Caco-2 (cell line): ENCODE measurements at regions of chr1 and their contacts with region 1.

Region 1: DNA sequence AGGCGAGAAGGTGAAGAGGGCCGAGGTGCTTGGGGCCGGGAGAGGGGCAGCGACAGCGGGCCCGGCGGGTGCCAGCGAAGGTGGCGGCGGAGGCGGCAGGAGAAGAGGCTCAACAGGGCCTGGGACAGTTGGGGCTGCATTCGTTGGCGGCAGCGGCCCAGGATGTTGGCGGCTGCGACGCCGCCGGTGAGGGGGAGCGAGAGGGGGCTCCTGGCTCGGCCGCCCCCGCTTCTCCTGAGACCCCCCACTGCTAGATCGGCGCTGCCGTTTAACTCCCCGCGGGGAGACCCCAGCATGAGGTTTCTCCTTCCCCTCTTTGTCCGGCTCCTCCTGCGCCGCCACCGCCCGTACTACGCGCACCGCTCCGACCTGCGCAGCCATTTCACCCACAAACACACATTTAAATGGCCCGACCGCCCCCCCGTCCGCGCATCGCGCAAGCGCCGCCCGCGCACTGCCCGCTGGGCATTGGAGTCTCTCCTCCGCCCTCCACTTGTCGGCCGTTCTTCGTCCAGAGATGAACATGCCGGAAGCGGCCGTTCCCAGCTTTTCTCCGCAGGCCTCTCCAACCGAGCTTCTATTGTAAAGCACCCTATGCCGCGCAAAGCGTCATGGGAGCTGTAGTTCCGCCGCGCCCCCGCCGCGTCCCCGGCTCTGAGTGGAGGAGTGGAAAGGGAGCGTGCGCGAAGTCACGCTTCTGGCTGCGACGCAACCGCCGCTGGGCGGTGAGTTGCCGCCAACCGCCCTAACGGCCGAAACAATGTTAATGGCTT is at the start of gene RSBN1:
- DNase-seq: peak; percentile 95 to 98
- H3K4me3 ChIP-seq: peak within 1 kb of the TSS; percentile 82
- H3K4me3 Mint-ChIP-seq: peak within 1 kb of the TSS; percentile 77
- H3K27ac Mint-ChIP-seq: peak within 1 kb of the TSS; percentile 70
- H3K4me1 ChIP-seq: peaks cover 8% of the 10 kb centered on the region
- H3K4me1 Mint-ChIP-seq: no peaks in the 10 kb centered on the region
- H3K27me3 ChIP-seq: no peaks in the 10 kb centered on the region
- H3K27me3 Mint-ChIP-seq: no peaks in the 10 kb centered on the region
- CTCF ChIP-seq: no peak
- total RNA-seq, gene RSBN1: 7.3 and 11.5 TPM in 2 replicates

Region 2: DNA sequence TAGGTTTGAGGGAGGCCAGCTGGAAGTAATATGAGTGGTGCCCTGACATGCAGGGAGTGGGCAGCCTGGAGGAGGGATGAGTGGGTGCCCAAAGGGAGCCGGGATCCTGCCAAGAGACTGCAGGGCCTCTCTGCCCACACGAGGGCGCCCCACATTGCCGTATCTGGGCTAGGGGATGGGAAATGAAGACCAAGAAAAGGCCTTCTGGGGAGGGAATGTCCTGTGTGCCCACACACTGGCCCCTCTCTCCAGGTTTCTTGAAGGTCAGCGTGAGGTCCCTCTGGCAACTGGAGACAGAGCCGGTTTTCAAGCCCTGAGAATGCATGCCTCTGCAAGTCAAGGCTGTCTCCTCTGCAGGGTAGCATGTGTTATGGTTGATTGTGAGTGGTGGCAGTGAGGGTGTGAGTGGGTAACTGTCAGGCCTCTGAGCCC is 1002.8 kb before region 1 on chr1:
- CTCF ChIA-PET with region 1: no interaction called
- POLR2A ChIA-PET with region 1: no interaction called
- intact Hi-C with region 1: no loop called
- DNase-seq: peak; percentile 79 to 84
- H3K4me3 ChIP-seq: no peak overlapping the region
- H3K4me3 Mint-ChIP-seq: no peak overlapping the region
- H3K27ac Mint-ChIP-seq: peak overlapping the region; percentile 59
- H3K4me1 ChIP-seq: peaks cover 52% of the 10 kb centered on the region
- H3K4me1 Mint-ChIP-seq: peaks cover 48% of the 10 kb centered on the region
- H3K27me3 ChIP-seq: no peaks in the 10 kb centered on the region
- H3K27me3 Mint-ChIP-seq: no peaks in the 10 kb centered on the region
- CTCF ChIP-seq: peak; percentile 65 to 77

Region 3: GRCh38 chr1:113759333-113760101 is 52.6 kb before region 1 on chr1 and contains the start of gene PHTF1:
- CTCF ChIA-PET with region 1: no interaction called
- POLR2A ChIA-PET with region 1: interaction called, 7 read pairs
- intact Hi-C with region 1: loop called (anchors 2 kb)
- DNase-seq: peak; percentile 59 to 75
- H3K4me3 ChIP-seq: peak within 1 kb of the TSS; percentile 65
- H3K4me3 Mint-ChIP-seq: peak within 1 kb of the TSS; percentile 77
- H3K27ac Mint-ChIP-seq: peak within 1 kb of the TSS; percentile 75
- H3K4me1 ChIP-seq: no peaks in the 10 kb centered on the region; the same call in 1 of the 2 replicates
- H3K4me1 Mint-ChIP-seq: no peaks in the 10 kb centered on the region
- H3K27me3 ChIP-seq: no peaks in the 10 kb centered on the region
- H3K27me3 Mint-ChIP-seq: no peaks in the 10 kb centered on the region
- CTCF ChIP-seq: no peak
- total RNA-seq, gene PHTF1: 10.4 and 12.7 TPM in 2 replicates

Region 4: DNA sequence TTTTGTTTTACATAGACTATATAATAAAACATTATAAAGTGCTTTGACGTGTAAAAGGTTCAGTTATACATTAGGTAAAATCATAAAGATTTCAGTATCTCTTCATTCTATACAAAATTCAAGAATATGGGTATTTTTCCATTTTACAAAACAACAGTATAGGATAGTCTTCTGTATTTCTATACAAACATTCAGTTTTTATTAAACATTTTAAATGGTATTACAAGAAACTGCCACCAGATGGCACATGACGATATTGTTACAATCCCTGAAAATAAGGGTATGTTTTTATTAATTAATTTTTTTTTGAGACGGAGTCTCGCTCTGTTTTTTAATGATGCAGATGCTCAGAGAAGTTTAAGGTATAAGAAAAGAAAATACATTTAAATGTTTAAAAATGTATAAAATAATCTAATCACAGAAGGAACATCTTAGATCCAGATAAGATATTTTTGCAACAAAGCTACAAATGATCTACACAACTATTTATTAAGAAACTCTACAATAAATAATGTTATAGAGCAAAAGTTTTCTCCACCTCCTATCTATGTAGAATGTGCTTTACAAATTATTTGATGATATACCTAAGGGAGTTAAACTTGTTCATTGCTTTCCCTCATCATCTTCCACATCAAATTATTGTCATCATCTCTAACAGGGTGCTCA is 23.7 kb after region 1 on chr1:
- CTCF ChIA-PET with region 1: no interaction called
- POLR2A ChIA-PET with region 1: no interaction called
- intact Hi-C with region 1: no loop called
- DNase-seq: peak in 1 of 2 experiments; percentile 37
- H3K4me3 ChIP-seq: no peak overlapping the region
- H3K4me3 Mint-ChIP-seq: no peak overlapping the region
- H3K27ac Mint-ChIP-seq: no peak overlapping the region
- H3K4me1 ChIP-seq: no peaks in the 10 kb centered on the region
- H3K4me1 Mint-ChIP-seq: no peaks in the 10 kb centered on the region
- H3K27me3 ChIP-seq: no peaks in the 10 kb centered on the region
- H3K27me3 Mint-ChIP-seq: peaks cover 8% of the 10 kb centered on the region
- CTCF ChIP-seq: peak in 1 of 2 experiments; percentile 37

Region 5: GRCh38 chr1:113928941-113929749 is 117.1 kb after region 1 on chr1 and contains the start of gene HIPK1:
- CTCF ChIA-PET with region 1: no interaction called
- POLR2A ChIA-PET with region 1: interaction called, 4 read pairs
- intact Hi-C with region 1: loop called (anchors 1 kb)
- DNase-seq: peak; percentile 88 to 91
- H3K4me3 ChIP-seq: peak within 1 kb of the TSS; percentile 82
- H3K4me3 Mint-ChIP-seq: peak within 1 kb of the TSS; percentile 87
- H3K27ac Mint-ChIP-seq: peak within 1 kb of the TSS; percentile 92
- H3K4me1 ChIP-seq: peaks cover 7% of the 10 kb centered on the region; the same call in 1 of the 2 replicates
- H3K4me1 Mint-ChIP-seq: peaks cover 19% of the 10 kb centered on the region
- H3K27me3 ChIP-seq: no peaks in the 10 kb centered on the region
- H3K27me3 Mint-ChIP-seq: no peaks in the 10 kb centered on the region
- CTCF ChIP-seq: no peak
- total RNA-seq, gene HIPK1: 42.6 and 48.2 TPM in 2 replicates